ENCODE measurements at regions of chr3 and their contacts with region 1.

Region 1: GRCh38 chr3:4584456-4585249 is 91.5 kb downstream of the ITPR1 start:
- DNase-seq: peak; percentile 16
- ATAC-seq: no peak
- H3K4me3 ChIP-seq: peak overlapping the region; percentile 45
- H3K27ac ChIP-seq: peak overlapping the region; percentile 84; the same call in 1 of the 2 replicates
- H3K4me1 ChIP-seq: peaks cover 15% of the 10 kb centered on the region
- H3K27me3 ChIP-seq: no peaks in the 10 kb centered on the region
- CTCF ChIP-seq: 0 out of 2 replicates have a peak, but pooled peaks have one; percentile 15
- POLR2A ChIP-seq: no peak
- RAD21 ChIP-seq: peak; percentile 23

Region 2: DNA sequence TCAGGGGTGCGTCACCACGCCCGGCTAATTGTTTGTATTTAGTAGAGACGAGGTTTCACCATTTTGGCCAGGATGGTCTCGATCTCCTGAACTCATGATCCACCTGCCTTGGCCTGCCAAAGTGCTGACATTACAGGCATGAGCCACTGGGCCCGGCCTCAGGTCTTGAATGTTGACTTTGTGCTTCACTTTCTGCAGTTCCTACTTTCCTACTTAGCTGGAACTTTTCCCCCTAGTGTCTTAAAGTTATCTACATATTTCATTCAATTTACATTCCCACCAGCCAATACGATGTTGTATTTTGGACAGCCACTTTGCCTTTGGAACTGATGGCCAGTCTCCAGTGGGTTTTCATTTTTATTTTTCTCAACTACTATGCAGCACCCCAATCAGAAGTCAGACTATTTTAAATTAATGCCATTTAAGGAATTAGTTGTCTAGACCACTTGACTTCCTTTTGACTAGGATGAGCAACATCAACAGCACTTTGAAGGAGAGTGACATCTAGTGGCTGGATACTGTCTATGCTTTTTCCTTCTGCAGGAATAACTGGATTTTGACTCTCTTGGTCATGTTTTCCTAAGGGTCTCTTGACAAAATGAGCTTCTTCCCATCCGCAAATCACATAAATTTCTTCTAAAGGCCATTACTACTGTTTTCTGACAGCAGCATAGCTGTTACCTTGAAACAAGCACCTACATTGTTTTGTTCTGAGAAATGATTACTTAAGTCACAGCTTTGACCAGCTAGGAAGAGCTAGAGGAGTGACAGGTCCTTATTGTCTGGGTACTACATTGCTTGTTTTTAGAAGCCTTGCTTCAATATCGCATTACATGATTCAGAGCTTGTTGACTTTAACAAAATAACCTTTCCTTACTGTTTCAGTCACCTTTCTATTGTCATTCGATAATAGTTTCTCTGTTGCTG is 48.7 kb after region 1 on chr3:
- CTCF ChIA-PET with region 1: interaction called, 5 read pairs
- POLR2A ChIA-PET with region 1: no interaction called
- dilution Hi-C with region 1: no loop called
- in situ Hi-C with region 1: no loop called
- intact Hi-C with region 1: loop called (anchors 5 kb)
- DNase-seq: peak; percentile 72
- ATAC-seq: peak; percentile 92
- H3K4me3 ChIP-seq: no peak overlapping the region
- H3K27ac ChIP-seq: no peak overlapping the region
- H3K4me1 ChIP-seq: no peaks in the 10 kb centered on the region
- H3K27me3 ChIP-seq: no peaks in the 10 kb centered on the region
- CTCF ChIP-seq: peak; percentile 87
- POLR2A ChIP-seq: no peak
- RAD21 ChIP-seq: peak; percentile 85